Mammary epithelial cell (primary cell): ENCODE measurements at regions of chr5 and their contacts with region 1.

Region 1: GRCh38 chr5:158998793-158999325 is 100.9 kb downstream of the EBF1 start:
- DNase-seq: no peak
- H3K4me3 ChIP-seq: no peak overlapping the region
- H3K27ac ChIP-seq: no peak overlapping the region
- H3K4me1 ChIP-seq: no peaks in the 10 kb centered on the region
- H3K27me3 ChIP-seq: no peaks in the 10 kb centered on the region
- CTCF ChIP-seq: no peak

Region 2: DNA sequence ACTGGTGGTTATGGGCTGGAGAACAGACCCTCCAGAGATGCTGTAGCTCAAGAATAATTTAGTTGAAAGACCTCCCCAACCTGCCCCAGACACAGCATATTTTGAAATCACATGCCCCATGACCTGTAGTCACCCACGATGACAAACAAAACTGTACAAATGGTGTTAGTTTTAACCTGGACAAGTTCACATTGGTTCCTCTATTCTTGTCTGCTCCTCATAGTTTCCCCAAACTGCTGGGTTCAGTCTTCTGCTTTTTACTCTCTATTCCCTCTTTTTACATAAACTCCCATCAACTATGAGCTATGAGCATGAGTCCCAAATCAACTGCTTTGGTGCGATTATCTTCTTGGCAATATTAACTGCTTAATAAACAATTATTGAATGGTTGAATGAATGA is 774.6 kb before region 1 on chr5:
- CTCF ChIA-PET with region 1: no interaction called
- dilution Hi-C with region 1: no loop called
- in situ Hi-C with region 1: no loop called
- intact Hi-C with region 1: no loop called
- DNase-seq: no peak
- H3K4me3 ChIP-seq: no peak overlapping the region
- H3K27ac ChIP-seq: no peak overlapping the region
- H3K4me1 ChIP-seq: no peaks in the 10 kb centered on the region
- H3K27me3 ChIP-seq: no peaks in the 10 kb centered on the region
- CTCF ChIP-seq: no peak

Region 3: GRCh38 chr5:158658446-158659230 is 340.2 kb before region 1 on chr5:
- CTCF ChIA-PET with region 1: interaction called, 12 read pairs
- dilution Hi-C with region 1: no loop called
- in situ Hi-C with region 1: no loop called
- intact Hi-C with region 1: no loop called
- DNase-seq: no peak
- H3K4me3 ChIP-seq: no peak overlapping the region
- H3K27ac ChIP-seq: no peak overlapping the region
- H3K4me1 ChIP-seq: no peaks in the 10 kb centered on the region
- H3K27me3 ChIP-seq: no peaks in the 10 kb centered on the region
- CTCF ChIP-seq: no peak

Region 4: DNA sequence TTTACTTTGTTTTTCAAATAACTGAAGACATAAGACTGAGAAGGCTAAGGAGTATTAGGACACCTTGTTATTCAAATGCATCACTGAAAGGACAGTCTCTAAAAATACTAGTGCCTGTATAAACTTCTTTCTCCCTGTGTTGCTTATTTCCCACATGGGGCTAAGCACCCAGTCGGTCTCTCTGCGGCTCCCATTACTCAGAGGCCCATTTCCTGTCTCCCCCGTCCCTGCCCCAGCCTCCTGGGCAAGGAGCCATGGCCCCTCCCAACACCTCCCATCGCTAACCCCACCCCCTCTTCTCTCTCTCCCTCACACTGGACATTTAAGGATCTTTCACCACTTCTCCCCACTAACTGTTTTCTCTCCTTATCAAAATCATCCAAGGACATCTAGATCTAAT is 18.9 kb after region 1 on chr5:
- CTCF ChIA-PET with region 1: no interaction called
- dilution Hi-C with region 1: no loop called
- in situ Hi-C with region 1: no loop called
- intact Hi-C with region 1: no loop called
- DNase-seq: peak; percentile 26
- H3K4me3 ChIP-seq: no peak overlapping the region
- H3K27ac ChIP-seq: no peak overlapping the region
- H3K4me1 ChIP-seq: peaks cover 9% of the 10 kb centered on the region
- H3K27me3 ChIP-seq: no peaks in the 10 kb centered on the region
- CTCF ChIP-seq: no peak